ENCODE measurements at regions of chr15 and their contacts with region 1.

Region 1: GRCh38 chr15:92979011-92979701 is 79.0 kb downstream of the CHD2 start:
- DNase-seq: no peak
- H3K4me3 Mint-ChIP-seq: no peak overlapping the region
- H3K27ac Mint-ChIP-seq: no peak overlapping the region
- H3K4me1 Mint-ChIP-seq: peaks cover 11% of the 10 kb centered on the region
- H3K27me3 Mint-ChIP-seq: no peaks in the 10 kb centered on the region

Region 2: DNA sequence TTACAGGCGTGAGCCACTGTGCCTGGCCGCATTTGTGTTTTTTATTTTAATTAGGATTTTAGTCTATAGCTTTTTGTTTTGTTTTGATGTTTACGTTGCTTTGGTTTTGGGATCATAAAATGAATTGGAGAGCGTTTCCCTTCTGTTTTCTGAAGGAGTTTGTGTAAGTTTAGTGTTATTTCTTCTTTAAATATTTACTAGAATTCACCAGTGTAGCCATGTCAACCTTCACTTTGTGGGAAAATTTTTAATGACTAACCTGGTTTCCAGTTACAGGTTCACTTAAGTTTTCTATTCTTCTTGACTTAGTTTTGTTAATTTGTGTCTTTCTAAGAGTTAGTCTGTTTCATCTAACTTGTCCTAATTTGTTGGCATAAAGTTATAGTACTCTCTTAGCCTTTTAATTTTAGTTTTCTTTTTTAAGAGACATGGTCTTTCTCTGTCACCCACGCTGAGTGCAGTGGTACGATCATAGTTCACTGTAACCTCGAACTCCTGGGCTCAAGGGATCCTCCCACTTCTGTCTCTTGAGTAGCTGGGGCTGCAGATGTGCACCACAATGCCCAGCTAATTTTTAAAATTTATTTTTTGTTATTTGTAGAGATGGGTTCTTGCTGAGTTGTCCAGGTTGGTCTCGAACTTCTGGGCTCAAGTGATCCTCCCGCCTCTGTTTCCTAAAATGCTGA is 18.0 kb before region 1 on chr15:
- intact Hi-C with region 1: loop called (anchors 2 kb)
- DNase-seq: no peak
- H3K4me3 Mint-ChIP-seq: no peak overlapping the region
- H3K27ac Mint-ChIP-seq: peak overlapping the region; percentile 66
- H3K4me1 Mint-ChIP-seq: peaks cover 56% of the 10 kb centered on the region
- H3K27me3 Mint-ChIP-seq: no peaks in the 10 kb centered on the region

Measured in activated T-helper 1 cell treated with anti-CD3 and anti-CD28 coated beads, Interleukin-12 subunit alpha, Interleukin-12 subunit beta, Interleukin-2, Interleukin-4 antibody, amounts not matched to agents 30 ng/mL and 10 ng/mL and 1 ng/mL, durations not matched to agents 14 hours and 24 hours and 36 hours (primary cell).